ENCODE measurements at regions of chr4 and their contacts with region 1.

Region 1: GRCh38 chr4:146342600-146343192 is 128.4 kb downstream of the REELD1 start:
- DNase-seq: no peak
- H3K4me3 Mint-ChIP-seq: no peak overlapping the region
- H3K27ac Mint-ChIP-seq: no peak overlapping the region
- H3K4me1 Mint-ChIP-seq: peaks cover 7% of the 10 kb centered on the region
- H3K27me3 Mint-ChIP-seq: peaks cover 2% of the 10 kb centered on the region

Region 2: DNA sequence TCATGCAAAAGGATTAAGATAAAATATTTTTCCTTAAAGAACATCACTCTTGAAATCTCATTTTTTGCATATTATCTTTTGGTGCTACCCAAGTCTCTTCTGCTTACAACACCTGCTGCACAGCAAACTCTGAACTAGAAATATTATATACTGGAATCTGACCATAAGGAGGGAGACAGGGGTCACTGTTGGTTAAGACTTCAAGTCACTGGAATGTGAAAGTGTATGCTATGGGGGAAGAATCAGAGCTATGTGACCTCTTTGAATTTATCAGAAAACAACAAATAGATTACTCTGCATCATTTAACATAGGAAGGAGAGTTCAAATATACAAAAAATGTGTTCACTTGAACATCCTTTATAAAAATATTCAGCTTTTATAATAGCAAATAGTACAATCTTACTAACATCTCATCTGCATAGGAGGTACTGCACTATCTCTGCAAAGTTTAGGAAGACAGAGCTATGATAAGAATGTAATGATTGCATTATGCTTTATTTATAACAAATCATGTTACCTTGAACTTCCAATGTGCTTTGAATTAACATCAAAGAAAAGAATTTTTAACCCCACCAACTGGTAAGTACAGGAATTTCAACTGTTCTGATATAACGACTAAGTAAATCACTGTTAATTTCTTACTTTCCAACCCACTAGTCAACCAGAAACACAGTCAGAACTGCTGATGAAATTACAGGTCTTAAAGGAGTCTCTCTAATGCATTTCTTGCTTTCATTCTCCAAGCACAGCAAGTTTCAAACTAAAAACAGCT is 473.9 kb before region 1 on chr4:
- intact Hi-C with region 1: no loop called
- DNase-seq: no peak
- H3K4me3 Mint-ChIP-seq: no peak overlapping the region
- H3K27ac Mint-ChIP-seq: no peak overlapping the region
- H3K4me1 Mint-ChIP-seq: peaks cover 39% of the 10 kb centered on the region
- H3K27me3 Mint-ChIP-seq: no peaks in the 10 kb centered on the region

Region 3: DNA sequence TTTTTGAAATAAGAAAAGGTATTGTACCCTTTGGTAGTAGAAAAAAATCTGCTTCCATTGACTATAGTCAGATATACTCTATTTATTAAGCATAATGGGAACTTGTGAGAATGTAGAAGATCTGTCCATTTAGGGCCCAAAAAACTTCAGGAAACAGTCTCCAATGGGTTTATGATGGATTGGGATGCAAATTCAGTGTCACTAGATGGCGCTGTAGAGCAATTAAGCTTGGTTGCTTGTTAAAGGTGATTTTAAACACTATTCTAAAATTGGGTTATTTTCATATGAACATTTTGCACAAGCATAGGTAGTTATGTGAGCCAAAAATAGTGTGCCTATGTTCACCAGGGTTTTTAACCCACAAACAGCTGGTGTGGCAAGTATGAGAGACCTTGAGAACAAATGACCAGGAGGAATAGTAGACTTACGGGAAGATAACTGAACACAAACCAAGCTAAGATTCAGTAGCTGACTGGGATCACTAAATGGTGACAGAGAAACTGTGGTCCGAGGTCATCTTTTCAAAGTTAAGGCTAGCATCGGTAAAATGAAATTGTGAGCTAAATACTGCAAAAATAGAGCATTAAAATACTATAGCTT is 247.5 kb before region 1 on chr4:
- intact Hi-C with region 1: loop called (anchors 5 kb)
- DNase-seq: no peak
- H3K4me3 Mint-ChIP-seq: no peak overlapping the region
- H3K27ac Mint-ChIP-seq: no peak overlapping the region
- H3K4me1 Mint-ChIP-seq: peaks cover 4% of the 10 kb centered on the region
- H3K27me3 Mint-ChIP-seq: peaks cover 15% of the 10 kb centered on the region

Region 4: GRCh38 chr4:146638801-146639605 is 296.3 kb after region 1 on chr4 and contains the start of gene POU4F2:
- intact Hi-C with region 1: loop called (anchors 2 kb)
- DNase-seq: no peak
- H3K4me3 Mint-ChIP-seq: no peak within 1 kb of the TSS
- H3K27ac Mint-ChIP-seq: peak within 1 kb of the TSS; percentile 81
- H3K4me1 Mint-ChIP-seq: no peaks in the 10 kb centered on the region
- H3K27me3 Mint-ChIP-seq: peaks cover 69% of the 10 kb centered on the region
- total RNA-seq, gene POU4F2: not detected in 2 replicates

Region 5: DNA sequence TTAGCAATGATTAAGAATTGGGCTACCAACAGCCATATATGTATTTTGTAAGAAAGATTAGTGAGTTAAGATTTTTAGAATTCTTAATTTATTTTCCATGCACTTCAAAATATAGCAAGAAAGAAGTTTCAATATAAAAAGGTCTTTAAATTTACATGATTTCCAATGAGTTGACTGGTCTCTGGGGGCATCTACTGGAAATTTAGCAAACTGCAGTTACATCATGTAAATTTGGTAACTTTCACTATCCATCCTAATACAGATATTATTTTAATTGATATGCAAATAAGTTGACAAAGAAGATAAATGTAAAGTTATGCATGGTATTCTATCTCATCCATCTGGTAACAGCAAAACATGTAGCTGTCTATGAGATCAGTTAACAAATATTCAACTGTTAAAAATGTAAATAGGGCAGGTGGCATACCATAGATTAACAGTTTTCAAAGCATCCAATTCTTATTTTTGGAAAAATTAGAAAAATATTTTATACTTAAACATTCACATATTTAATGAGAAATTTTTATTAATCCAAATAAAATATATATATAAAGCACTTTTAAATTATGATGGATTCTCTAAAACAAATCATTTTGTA is 573.9 kb after region 1 on chr4:
- intact Hi-C with region 1: loop called (anchors 1 kb)
- DNase-seq: no peak
- H3K4me3 Mint-ChIP-seq: no peak overlapping the region
- H3K27ac Mint-ChIP-seq: no peak overlapping the region
- H3K4me1 Mint-ChIP-seq: no peaks in the 10 kb centered on the region
- H3K27me3 Mint-ChIP-seq: peaks cover 4% of the 10 kb centered on the region

Region 6: DNA sequence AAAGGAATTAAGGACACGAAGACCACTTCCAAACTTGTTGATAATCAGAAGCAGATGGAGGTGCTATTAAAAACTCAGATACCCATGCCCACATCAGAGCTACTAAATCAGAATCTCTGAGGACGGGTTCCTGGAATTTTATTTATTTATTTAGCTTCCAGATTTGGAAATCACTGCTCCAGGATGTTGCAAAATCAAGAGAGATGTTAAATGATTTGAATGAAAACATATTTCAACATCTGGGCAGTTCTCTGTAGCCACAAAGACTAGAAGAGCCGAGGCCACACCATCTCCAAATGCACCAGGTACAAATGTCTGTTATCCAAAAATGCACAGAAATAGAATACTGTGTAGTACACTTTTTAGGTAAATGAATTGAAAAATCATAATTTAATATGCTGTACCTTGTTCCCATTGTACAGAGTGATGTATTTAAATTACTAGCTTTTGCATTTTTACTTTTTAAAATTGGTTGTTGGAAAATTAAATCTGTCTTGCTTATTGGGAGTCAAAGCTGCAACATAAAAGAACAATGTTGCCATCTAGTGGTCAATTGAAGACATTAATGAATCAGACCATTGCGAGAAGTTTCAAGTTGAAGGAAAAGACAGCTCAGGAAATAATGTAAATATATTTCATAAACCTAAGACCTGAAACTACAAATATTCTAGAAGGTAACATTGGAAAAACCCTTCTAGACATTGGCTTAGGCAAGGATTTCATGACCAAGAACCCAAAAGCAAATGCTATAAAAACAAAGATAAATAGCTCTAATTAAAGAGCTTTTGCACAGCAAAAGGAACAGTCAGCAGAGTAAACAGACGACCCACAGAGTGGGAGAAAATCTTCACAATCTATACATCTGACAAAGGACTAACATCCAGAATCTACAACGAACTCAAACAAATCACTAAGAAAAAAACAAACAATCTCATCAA is 754.2 kb after region 1 on chr4:
- intact Hi-C with region 1: loop called (anchors 1 kb)
- DNase-seq: no peak
- H3K4me3 Mint-ChIP-seq: no peak overlapping the region
- H3K27ac Mint-ChIP-seq: no peak overlapping the region
- H3K4me1 Mint-ChIP-seq: no peaks in the 10 kb centered on the region
- H3K27me3 Mint-ChIP-seq: peaks cover 12% of the 10 kb centered on the region

Region 7: DNA sequence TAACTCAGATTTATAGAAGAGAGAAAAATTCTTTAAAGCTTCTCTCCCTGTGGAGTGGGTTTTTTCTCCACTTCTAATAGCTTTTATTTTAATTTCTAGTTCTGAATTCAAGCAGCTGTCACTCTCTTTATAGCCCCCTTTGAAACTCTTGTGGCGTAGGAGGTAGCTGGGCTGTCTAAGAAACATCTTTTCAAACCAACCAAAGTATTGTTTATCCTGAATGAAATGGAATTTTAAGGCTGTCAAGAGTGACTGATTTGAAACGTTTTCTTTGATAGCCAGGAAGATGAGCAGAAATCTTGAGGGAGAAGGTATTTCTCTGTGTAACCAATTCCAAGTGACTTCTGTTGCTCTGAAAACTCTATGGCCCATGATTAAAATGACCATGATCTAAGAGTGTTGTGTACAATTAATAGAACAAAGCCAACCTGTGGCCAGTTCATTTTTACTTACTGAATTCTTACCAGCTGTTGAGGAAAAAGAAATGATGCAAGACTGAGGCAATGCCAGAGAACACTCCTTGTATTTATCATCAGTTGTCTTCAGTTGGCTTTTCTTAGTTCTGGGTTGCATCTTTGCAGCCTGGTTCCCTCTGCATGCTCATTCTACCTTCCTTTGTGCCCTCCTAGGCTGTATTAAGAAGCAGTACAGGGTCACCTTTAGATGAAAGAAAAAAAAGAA is 1687.6 kb after region 1 on chr4:
- intact Hi-C with region 1: loop called (anchors 5 kb)
- DNase-seq: no peak
- H3K4me3 Mint-ChIP-seq: no peak overlapping the region
- H3K27ac Mint-ChIP-seq: no peak overlapping the region
- H3K4me1 Mint-ChIP-seq: no peaks in the 10 kb centered on the region
- H3K27me3 Mint-ChIP-seq: no peaks in the 10 kb centered on the region

Measured in activated T-helper 1 cell treated with anti-CD3 and anti-CD28 coated beads, Interleukin-12 subunit alpha, Interleukin-12 subunit beta, Interleukin-2, Interleukin-4 antibody, amounts not matched to agents 30 ng/mL and 10 ng/mL and 1 ng/mL, durations not matched to agents 14 hours and 24 hours and 36 hours (primary cell).